ENCODE measurements at regions of chr10 and their contacts with region 1.

Region 1: GRCh38 chr10:7471720-7472367 is 61.0 kb upstream of the SFMBT2 start:
- DNase-seq: peak; percentile 27
- H3K4me3 Mint-ChIP-seq: peak overlapping the region; percentile 32
- H3K27ac Mint-ChIP-seq: no peak overlapping the region
- H3K4me1 Mint-ChIP-seq: peaks cover 28% of the 10 kb centered on the region
- H3K27me3 Mint-ChIP-seq: no peaks in the 10 kb centered on the region

Region 2: DNA sequence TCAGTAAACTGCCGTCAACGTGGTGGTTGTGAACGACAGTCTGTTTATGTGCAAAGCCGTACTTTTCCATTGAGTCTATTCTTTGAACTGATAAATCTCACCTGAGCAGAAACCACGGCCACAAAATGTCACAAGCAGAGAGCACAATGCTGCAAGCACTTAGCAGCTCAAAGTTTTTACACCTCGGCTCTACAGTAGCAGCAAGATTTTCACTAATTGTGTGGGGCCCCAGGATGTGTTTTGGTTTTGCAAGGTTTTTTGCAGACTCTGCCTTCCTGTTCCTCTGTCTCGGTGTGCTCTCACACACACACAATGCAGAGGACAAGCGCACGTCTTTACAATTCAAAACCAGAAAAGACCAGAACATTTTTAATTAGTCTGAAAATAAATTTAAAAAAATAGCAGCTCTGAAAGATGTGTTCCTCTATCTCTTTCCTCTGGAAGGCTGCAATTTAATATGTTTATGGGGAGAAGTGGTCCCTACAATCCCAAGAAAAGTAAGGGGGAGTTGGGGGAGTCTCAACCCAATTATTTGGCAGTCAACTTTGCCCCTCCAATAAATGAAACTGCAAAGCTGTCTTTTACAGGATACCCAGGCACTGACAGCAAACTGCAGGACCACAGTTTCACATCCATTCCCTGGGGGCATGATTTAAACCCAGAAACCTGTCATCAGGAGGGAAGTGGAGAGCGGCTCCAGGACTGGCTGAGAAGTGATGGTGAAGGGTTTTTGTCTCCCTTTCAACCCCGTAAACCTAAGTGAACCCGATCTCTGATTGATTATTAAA is 12.8 kb after region 1 on chr10:
- CTCF ChIA-PET with region 1: no interaction called
- intact Hi-C with region 1: no loop called
- DNase-seq: peak; percentile 76
- H3K4me3 Mint-ChIP-seq: peak overlapping the region; percentile 60
- H3K27ac Mint-ChIP-seq: peak overlapping the region; percentile 71
- H3K4me1 Mint-ChIP-seq: peaks cover 76% of the 10 kb centered on the region
- H3K27me3 Mint-ChIP-seq: no peaks in the 10 kb centered on the region

Region 3: GRCh38 chr10:7507887-7508726 is 36.3 kb after region 1 on chr10:
- CTCF ChIA-PET with region 1: no interaction called
- intact Hi-C with region 1: loop called (anchors 5 kb)
- DNase-seq: peak; percentile 52
- H3K4me3 Mint-ChIP-seq: peak overlapping the region; percentile 30
- H3K27ac Mint-ChIP-seq: peak overlapping the region; percentile 80
- H3K4me1 Mint-ChIP-seq: peaks cover 37% of the 10 kb centered on the region
- H3K27me3 Mint-ChIP-seq: no peaks in the 10 kb centered on the region

Region 4: DNA sequence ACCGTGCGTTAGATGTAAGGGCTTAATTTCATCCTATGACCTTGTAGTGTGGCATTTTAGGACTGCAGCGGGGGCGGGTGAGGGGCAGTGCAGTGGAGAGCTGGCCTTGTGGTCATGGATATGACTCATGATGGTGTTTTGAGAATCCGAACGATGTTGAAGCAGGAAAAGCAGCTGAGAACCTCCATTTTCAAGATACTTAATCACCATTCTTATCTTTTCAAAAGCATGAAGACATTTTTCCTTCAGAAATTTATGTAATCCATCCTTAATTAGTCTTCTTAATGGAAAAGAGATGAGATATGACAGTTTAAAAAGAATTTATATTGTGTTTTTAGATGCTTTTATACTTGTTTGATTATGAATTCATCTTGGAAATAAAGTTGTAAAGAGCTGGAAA is 325.7 kb after region 1 on chr10:
- CTCF ChIA-PET with region 1: no interaction called
- intact Hi-C with region 1: no loop called
- DNase-seq: no peak
- H3K4me3 Mint-ChIP-seq: no peak overlapping the region
- H3K27ac Mint-ChIP-seq: no peak overlapping the region
- H3K4me1 Mint-ChIP-seq: peaks cover 32% of the 10 kb centered on the region
- H3K27me3 Mint-ChIP-seq: no peaks in the 10 kb centered on the region

Region 5: DNA sequence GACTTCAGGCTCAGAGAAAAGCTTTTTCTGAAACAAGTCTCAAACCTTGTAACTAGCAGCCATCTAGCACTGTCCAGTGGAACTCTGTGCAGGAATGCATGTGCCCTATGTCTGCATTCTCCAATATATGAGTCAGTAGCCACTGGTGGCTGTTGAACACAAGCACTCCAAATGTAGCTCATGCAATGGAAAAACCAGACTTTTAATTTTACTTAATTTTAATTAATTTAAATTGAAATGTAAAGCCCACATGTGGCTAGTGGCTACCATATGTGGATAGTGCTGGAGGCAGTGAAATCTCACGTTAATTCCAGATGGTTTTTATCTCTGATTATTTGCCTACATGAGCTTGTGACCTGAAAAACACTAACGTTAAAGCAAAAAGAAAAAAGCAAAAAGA is 807.8 kb after region 1 on chr10:
- CTCF ChIA-PET with region 1: no interaction called
- intact Hi-C with region 1: no loop called
- DNase-seq: no peak
- H3K4me3 Mint-ChIP-seq: no peak overlapping the region
- H3K27ac Mint-ChIP-seq: no peak overlapping the region
- H3K4me1 Mint-ChIP-seq: peaks cover 2% of the 10 kb centered on the region
- H3K27me3 Mint-ChIP-seq: no peaks in the 10 kb centered on the region